Right ventricle myocardium superior (tissue), 1 donor: ENCODE measurements at regions of chr3 and their contacts with region 1.

Region 1: DNA sequence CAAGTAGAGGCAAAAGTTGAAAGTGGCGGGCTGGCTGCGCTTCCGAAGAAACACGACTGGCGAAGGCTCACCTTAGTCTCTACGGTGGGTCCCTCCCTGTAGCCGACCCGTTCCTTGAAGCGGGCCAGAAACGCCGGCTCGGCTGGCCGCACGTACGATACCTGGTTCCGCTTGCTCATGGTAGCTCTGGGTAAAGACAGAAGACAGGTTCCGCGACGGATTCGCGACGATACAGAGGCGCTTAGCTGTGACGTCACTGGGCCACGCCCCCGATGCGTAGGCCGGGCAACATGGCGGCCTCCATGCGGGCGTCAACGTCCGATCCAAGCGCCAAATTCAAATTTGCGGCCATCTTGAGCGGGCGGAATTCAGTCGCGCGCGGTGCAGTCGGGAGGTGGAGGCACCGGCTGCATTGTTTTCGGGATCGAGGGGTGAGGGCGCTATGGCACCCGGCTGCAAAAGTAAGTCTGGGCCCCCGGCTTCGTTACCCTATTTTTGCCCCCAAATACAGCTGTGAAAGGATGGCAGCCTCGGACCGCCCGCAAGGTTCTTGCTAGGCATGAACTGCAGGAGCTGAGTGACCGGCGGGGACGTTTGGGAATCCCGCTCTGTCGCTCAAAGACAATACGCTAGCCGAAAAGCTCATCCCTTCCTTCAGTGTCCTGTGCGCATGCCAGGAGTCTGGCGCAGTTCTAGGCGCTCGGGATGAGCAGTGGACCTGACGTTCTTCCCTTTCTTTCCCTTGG is at the starts of genes KIAA1143 and KIF15:
- DNase-seq: peak; percentile 98
- ATAC-seq: peak; percentile 100
- total RNA-seq, gene KIAA1143: 32.8 TPM
- total RNA-seq, gene KIF15: 0.73 TPM

Region 2: GRCh38 chr3:44510000-44510368 is 251.6 kb before region 1 on chr3:
- intact Hi-C with region 1: no loop called
- DNase-seq: no peak
- ATAC-seq: no peak

Region 3: DNA sequence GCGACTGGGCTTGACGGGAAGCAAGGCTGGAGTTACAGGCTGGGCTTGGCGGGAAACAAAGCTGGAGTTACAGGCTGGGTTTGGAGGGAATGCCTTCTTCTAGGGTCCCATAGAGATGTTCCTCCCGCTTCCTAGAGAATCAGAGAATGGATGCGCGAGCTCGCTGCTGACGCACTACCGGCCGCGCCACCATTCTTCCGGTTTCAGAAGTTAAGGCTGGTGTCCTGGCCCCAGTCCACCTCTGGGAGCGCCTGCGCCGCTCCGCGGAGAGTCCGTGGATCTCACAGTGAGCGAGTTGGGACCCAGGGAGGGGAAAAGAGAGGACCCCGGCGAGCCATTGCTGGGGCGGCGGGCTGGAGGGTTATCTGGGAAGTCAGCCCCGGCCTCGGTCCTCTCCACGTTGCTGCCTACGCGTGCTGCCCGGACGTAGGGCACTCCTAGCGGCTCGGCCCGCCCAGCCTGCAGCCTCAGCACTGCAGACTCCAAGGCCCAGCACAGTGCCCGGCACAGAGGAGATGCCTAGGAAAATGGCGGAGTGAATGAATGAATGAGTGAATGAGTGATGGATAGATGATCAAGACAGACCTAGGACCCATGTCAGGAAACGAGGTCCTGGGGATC is 49.0 kb before region 1 on chr3 and contains the start of gene ZNF502:
- intact Hi-C with region 1: loop called (anchors 10 kb)
- DNase-seq: peak; percentile 93
- ATAC-seq: peak; percentile 100
- total RNA-seq, gene ZNF502: 4.1 TPM

Region 4: DNA sequence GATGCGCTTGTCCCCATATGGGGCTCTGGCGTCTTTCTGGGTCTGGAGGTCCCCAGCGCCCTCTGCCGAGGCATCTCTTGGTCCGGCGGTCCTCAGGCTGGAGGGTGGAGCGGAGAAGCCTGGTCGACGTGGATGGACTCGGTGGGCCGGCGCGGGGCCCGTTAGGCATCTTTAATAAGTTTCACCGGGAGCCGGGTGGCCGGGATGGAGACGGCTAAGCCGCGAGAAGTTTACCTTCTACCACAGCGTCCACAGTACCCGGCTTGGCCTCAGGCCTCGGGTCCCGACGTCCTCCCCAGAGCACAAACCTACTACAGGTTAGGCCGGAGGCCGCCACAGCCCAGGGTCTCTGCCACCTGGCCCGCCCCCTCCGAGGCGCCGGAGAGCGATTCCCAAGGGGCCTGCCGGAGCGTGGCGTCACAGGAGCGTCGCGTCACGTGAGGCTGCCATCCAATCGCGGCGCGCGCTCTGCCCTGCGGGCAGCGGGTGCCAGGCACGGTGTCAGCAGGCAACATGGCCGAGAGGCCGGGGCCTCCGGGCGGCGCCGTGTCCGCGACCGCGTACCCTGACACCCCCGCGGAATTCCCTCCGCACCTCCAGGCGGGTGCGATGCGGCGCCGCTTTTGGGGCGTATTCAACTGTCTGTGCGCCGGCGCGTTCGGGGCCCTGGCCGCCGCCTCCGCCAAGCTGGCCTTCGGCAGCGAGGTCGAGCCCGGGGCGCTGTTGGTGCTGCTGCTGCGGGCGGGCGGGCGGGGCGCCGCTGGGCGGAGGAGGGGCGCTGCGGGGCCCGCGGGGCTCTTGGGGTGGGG is 100.0 kb after region 1 on chr3 and contains the start of gene TMEM42:
- intact Hi-C with region 1: loop called (anchors 5 kb)
- DNase-seq: peak; percentile 96
- ATAC-seq: peak; percentile 100
- total RNA-seq, gene TMEM42: 10.2 TPM

Region 5: DNA sequence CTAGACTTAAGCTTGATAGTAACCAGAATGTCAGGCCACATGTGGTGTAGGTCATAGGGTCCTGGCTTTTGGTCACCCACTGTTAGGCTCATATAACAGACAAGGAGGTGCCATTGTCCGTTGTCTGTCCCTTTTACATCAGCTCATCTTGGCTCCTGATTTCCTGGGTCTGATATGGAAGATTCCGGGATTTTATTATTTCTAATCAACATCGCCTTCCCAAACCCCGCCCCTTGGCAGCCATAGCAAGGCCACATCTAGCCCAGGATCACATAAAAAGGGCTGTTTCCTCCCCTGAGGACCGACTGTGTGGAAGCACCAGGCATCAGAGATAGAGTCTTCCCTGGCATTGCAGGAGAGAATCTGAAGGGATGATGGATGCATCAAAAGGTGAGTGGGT is 112.7 kb after region 1 on chr3 and contains the start of gene TGM4:
- intact Hi-C with region 1: no loop called
- DNase-seq: no peak
- ATAC-seq: no peak
- total RNA-seq, gene TGM4: not detected